H1 (cell line): ENCODE measurements at regions of chr9 and their contacts with region 1.

Region 1: DNA sequence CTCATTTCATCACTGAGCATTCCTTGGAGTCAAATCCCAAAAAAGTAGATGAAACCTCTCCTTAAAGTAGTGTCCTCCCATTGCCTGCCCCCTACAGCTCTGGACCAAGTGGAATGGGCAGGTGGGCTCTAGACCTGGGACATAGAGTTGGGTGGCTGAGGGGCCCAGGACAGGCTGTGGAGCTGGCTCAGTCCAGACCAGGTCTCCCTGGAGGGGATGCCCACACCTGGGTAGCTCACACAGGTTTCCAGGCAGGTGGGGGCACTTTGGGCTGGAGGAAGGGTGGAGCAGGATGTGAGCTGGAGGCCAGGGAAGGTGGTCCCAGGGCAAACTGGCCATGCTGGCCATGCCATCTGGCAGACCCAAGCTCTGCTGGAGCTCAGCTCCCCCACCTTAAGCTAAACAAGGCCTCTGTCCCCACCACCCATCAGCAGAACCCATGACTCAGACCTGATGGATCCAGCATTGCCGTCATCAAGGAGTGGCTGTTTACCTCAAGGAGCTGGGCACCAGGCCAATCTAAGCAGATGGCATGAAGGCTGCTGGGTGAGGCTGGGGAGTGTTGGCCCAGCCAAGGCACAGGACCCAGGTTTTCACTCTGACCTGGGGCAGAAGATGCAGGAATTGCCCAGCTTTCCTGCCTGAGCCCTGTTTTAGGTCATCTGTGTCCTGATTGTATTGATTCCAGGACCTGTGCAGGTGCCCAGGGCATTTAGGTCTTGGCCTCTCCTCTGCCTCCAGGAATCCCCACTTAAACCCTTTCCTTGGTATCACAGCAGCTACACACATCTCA is 6.1 kb upstream of the SPINK4 start:
- DNase-seq: no peak
- H3K4me3 ChIP-seq: no peak overlapping the region
- H3K27ac ChIP-seq: no peak overlapping the region
- H3K4me1 ChIP-seq: no peaks in the 10 kb centered on the region
- H3K27me3 ChIP-seq: no peaks in the 10 kb centered on the region; a peak in 2 of 7 replicates
- CTCF ChIP-seq: no peak
- EP300 ChIP-seq: no peak
- POLR2A ChIP-seq: no peak
- RAD21 ChIP-seq: no peak

Region 2: DNA sequence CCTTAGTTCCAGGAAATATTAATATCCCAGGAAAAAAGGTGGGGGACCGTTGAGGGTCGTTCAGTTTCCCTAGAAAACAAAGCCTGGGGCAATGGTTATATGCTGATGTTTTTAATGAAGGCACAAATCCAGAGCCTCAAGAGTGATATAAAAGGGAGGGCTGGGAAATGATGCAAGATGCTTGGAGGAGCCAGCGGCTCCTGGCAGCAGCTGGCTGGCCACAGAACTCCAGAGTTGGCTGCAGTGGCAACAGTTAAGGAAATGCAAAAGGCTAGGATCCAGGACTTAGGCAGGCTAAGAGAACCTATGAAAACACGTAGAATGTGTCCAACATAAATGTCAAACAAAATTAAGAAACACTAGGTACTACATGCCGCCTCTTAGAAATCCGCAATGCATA is 35.7 kb before region 1 on chr9:
- CTCF ChIA-PET with region 1: no interaction called
- POLR2A ChIA-PET with region 1: no interaction called
- DNase-seq: no peak
- H3K4me3 ChIP-seq: no peak overlapping the region
- H3K27ac ChIP-seq: no peak overlapping the region
- H3K4me1 ChIP-seq: no peaks in the 10 kb centered on the region
- H3K27me3 ChIP-seq: 0 out of 7 replicates have a peak, but pooled peaks cover 0 to under 1% (median 0%) of the 10 kb centered on the region in 4 experiments
- CTCF ChIP-seq: no peak
- EP300 ChIP-seq: no peak
- POLR2A ChIP-seq: no peak
- RAD21 ChIP-seq: no peak

Region 3: GRCh38 chr9:33249087-33249657 is 15.3 kb after region 1 on chr9:
- CTCF ChIA-PET with region 1: interaction called, 4 read pairs
- POLR2A ChIA-PET with region 1: interaction called, 10 read pairs
- DNase-seq: no peak
- H3K4me3 ChIP-seq: no peak overlapping the region
- H3K27ac ChIP-seq: no peak overlapping the region
- H3K4me1 ChIP-seq: no peaks in the 10 kb centered on the region
- H3K27me3 ChIP-seq: no peaks in the 10 kb centered on the region
- CTCF ChIP-seq: no peak
- EP300 ChIP-seq: no peak
- POLR2A ChIP-seq: no peak
- RAD21 ChIP-seq: no peak